Naive thymus-derived CD4-positive, alpha-beta T cell (primary cell): ENCODE measurements at regions of chr12 and their contacts with region 1.

Region 1: DNA sequence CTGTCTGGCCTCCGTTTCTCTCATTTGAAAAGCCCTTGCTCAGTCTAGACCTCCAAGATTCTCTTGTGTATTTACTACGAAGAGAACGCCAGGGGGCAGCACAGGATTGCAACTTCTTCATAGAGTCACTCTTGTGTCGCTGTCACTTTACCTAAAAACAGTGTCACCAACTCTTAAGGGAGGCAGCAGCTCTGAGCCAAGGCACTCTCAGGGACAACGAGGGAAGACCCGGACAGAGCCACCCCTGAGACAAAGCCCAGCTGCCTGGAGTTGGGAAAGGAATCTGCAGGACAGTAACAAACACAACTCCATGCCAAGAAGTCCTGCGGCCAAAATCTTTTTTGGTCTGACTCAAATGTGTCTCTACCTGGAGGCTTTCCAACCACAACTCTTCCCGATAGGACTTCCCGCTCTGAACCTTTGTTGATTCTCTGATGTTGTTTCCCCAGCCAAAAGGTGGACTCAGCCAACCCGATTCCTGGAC is 9.6 kb upstream of the RPAP3 start:
- DNase-seq: peak; percentile 56 to 83 (median 75)
- ATAC-seq: peak; percentile 87
- H3K4me3 ChIP-seq: no peak overlapping the region
- H3K4me3 Mint-ChIP-seq: peak overlapping the region in 7 of 10 donors; percentile 15 to 54 (median 44)
- H3K27ac ChIP-seq: no peak overlapping the region
- H3K27ac Mint-ChIP-seq: peak overlapping the region; percentile 26 to 91 (median 81)
- H3K4me1 ChIP-seq: peaks cover 0 to 25% of the 10 kb centered on the region in 2 donors
- H3K4me1 Mint-ChIP-seq: peaks cover 17 to 34% (median 26%) of the 10 kb centered on the region in 7 donors
- H3K27me3 ChIP-seq: no peaks in the 10 kb centered on the region
- H3K27me3 Mint-ChIP-seq: no peaks in the 10 kb centered on the region

Region 2: GRCh38 chr12:47032644-47033043 is 682.8 kb before region 1 on chr12:
- CTCF ChIA-PET with region 1: interaction called, 5 read pairs
- POLR2A ChIA-PET with region 1: no interaction called
- intact Hi-C with region 1: loop called in 1 of 2 experiments (anchors 1 kb)
- DNase-seq: peak in 7 of 9 donors; percentile 48 to 74 (median 60)
- ATAC-seq: peak; percentile 83
- H3K4me3 ChIP-seq: no peak overlapping the region
- H3K4me3 Mint-ChIP-seq: peak overlapping the region in 6 of 10 donors; percentile 1 to 44 (median 28)
- H3K27ac ChIP-seq: no peak overlapping the region
- H3K27ac Mint-ChIP-seq: peak overlapping the region in 5 of 9 donors; percentile 1 to 36 (median 11)
- H3K4me1 ChIP-seq: peaks cover 0 to 6% of the 10 kb centered on the region in 2 donors
- H3K4me1 Mint-ChIP-seq: peaks cover 9 to 40% (median 24%) of the 10 kb centered on the region in 7 donors
- H3K27me3 ChIP-seq: no peaks in the 10 kb centered on the region
- H3K27me3 Mint-ChIP-seq: peaks cover 0 to 9% (median 0%) of the 10 kb centered on the region in 5 donors

Region 3: GRCh38 chr12:47758834-47759690 is 43.6 kb after region 1 on chr12 and contains the start of gene RAPGEF3:
- CTCF ChIA-PET with region 1: interaction called, 11 read pairs
- POLR2A ChIA-PET with region 1: no interaction called
- intact Hi-C with region 1: loop called in 1 of 2 experiments (anchors 1 kb)
- DNase-seq: peak; percentile 47 to 81 (median 60)
- ATAC-seq: peak; percentile 91
- H3K4me3 ChIP-seq: peak within 1 kb of the TSS; percentile 66
- H3K4me3 Mint-ChIP-seq: peak within 1 kb of the TSS; percentile 61 to 85 (median 80)
- H3K27ac ChIP-seq: peak within 1 kb of the TSS; percentile 27
- H3K27ac Mint-ChIP-seq: peak within 1 kb of the TSS in 4 of 9 donors; percentile 29 to 55 (median 47)
- H3K4me1 ChIP-seq: peaks cover 9 to 11% of the 10 kb centered on the region in 2 donors
- H3K4me1 Mint-ChIP-seq: peaks cover 0 to 23% (median 9%) of the 10 kb centered on the region in 7 donors
- H3K27me3 ChIP-seq: no peaks in the 10 kb centered on the region
- H3K27me3 Mint-ChIP-seq: peaks cover 0 to 5% (median 0%) of the 10 kb centered on the region in 5 donors
- total RNA-seq, gene RAPGEF3: 0.08 to 1.9 (median 1.1) TPM in 4 of 5 experiments, not detected in the other

Region 4: GRCh38 chr12:47828608-47829536 is 113.4 kb after region 1 on chr12:
- CTCF ChIA-PET with region 1: interaction called, 14 read pairs
- POLR2A ChIA-PET with region 1: no interaction called
- intact Hi-C with region 1: no loop called
- DNase-seq: peak in 1 of 9 donors; percentile 36
- ATAC-seq: no peak
- H3K4me3 ChIP-seq: no peak overlapping the region
- H3K4me3 Mint-ChIP-seq: peak overlapping the region in 8 of 10 donors; percentile 12 to 73 (median 51)
- H3K27ac ChIP-seq: peak overlapping the region; percentile 52
- H3K27ac Mint-ChIP-seq: peak overlapping the region; percentile 73 to 97 (median 86)
- H3K4me1 ChIP-seq: peaks cover 51 to 97% of the 10 kb centered on the region in 2 donors
- H3K4me1 Mint-ChIP-seq: peaks cover 70 to 98% (median 88%) of the 10 kb centered on the region in 7 donors
- H3K27me3 ChIP-seq: no peaks in the 10 kb centered on the region
- H3K27me3 Mint-ChIP-seq: no peaks in the 10 kb centered on the region

Region 5: DNA sequence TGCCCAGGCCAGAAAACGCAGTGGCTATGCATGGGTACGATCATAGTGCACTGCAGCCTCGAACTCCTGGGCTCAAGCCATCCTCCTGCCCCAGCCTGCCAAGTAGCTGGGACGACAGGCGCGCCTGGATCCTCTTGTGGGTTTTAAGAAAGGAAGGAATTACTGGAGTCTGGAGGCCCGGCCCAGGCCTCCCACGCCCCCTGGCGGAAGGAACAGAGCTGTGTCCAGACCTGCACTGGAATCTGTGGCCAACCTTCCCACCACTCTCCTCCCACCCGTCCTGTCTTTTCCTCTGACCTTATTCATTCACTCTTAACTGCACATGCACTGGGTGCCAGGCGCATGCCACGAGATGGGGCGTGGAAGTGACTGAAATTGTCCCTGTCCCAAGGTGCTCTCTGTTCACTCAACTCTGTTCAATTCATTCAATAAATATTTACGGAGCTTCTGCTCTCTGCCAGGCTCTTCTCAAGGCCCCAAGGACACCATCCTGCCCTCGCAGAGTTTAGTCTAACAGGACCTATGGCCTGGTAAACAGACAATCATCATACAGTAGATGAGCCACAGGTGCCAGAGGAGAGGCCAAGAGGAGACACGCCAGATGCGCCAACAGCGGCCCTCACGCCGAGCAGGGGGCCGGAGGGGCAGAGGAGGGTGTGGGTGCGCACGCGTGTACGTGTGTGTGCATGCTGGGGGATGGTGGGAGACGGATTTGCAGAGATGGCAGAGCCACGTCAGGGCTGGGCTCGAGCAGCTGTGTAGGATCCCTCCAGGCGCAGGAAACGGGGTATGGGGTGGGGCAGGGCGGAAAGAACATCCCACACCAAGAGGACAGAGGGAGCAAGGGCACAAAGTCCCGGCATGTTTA is 234.2 kb after region 1 on chr12:
- CTCF ChIA-PET with region 1: interaction called, 3 read pairs
- POLR2A ChIA-PET with region 1: no interaction called
- intact Hi-C with region 1: loop called (anchors 1 to 2 kb)
- DNase-seq: peak in 7 of 9 donors; percentile 22 to 67 (median 45)
- ATAC-seq: peak; percentile 72
- H3K4me3 ChIP-seq: no peak overlapping the region
- H3K4me3 Mint-ChIP-seq: no peak overlapping the region
- H3K27ac ChIP-seq: no peak overlapping the region
- H3K27ac Mint-ChIP-seq: peak overlapping the region in 1 of 9 donors; percentile 38
- H3K4me1 ChIP-seq: no peaks in the 10 kb centered on the region
- H3K4me1 Mint-ChIP-seq: peaks cover 0 to 18% (median 0%) of the 10 kb centered on the region in 7 donors
- H3K27me3 ChIP-seq: no peaks in the 10 kb centered on the region
- H3K27me3 Mint-ChIP-seq: peaks cover 4 to 13% (median 5%) of the 10 kb centered on the region in 5 donors

Region 6: GRCh38 chr12:48165094-48165981 is 449.9 kb after region 1 on chr12:
- CTCF ChIA-PET with region 1: interaction called, 3 read pairs
- POLR2A ChIA-PET with region 1: no interaction called
- intact Hi-C with region 1: loop called (anchors 1 kb)
- DNase-seq: peak in 7 of 9 donors; percentile 54 to 77 (median 70)
- ATAC-seq: peak; percentile 87
- H3K4me3 ChIP-seq: no peak overlapping the region
- H3K4me3 Mint-ChIP-seq: no peak overlapping the region
- H3K27ac ChIP-seq: no peak overlapping the region
- H3K27ac Mint-ChIP-seq: no peak overlapping the region
- H3K4me1 ChIP-seq: no peaks in the 10 kb centered on the region
- H3K4me1 Mint-ChIP-seq: peaks cover 2 to 16% (median 14%) of the 10 kb centered on the region in 7 donors
- H3K27me3 ChIP-seq: no peaks in the 10 kb centered on the region
- H3K27me3 Mint-ChIP-seq: peaks cover 0 to 33% (median 12%) of the 10 kb centered on the region in 5 donors

Region 7: GRCh38 chr12:48618541-48618940 is 903.1 kb after region 1 on chr12:
- CTCF ChIA-PET with region 1: no interaction called
- POLR2A ChIA-PET with region 1: no interaction called
- intact Hi-C with region 1: loop called in 1 of 2 experiments (anchors 1 kb)
- DNase-seq: peak; percentile 27 to 82 (median 75)
- ATAC-seq: peak; percentile 97
- H3K4me3 ChIP-seq: no peak overlapping the region
- H3K4me3 Mint-ChIP-seq: no peak overlapping the region
- H3K27ac ChIP-seq: no peak overlapping the region
- H3K27ac Mint-ChIP-seq: no peak overlapping the region
- H3K4me1 ChIP-seq: no peaks in the 10 kb centered on the region
- H3K4me1 Mint-ChIP-seq: peaks cover 0 to 5% (median 0%) of the 10 kb centered on the region in 7 donors
- H3K27me3 ChIP-seq: no peaks in the 10 kb centered on the region
- H3K27me3 Mint-ChIP-seq: peaks cover 24 to 44% (median 29%) of the 10 kb centered on the region in 5 donors